HAP-1 (cell line): ENCODE measurements at regions of chr2 and their contacts with region 1.

Region 1: DNA sequence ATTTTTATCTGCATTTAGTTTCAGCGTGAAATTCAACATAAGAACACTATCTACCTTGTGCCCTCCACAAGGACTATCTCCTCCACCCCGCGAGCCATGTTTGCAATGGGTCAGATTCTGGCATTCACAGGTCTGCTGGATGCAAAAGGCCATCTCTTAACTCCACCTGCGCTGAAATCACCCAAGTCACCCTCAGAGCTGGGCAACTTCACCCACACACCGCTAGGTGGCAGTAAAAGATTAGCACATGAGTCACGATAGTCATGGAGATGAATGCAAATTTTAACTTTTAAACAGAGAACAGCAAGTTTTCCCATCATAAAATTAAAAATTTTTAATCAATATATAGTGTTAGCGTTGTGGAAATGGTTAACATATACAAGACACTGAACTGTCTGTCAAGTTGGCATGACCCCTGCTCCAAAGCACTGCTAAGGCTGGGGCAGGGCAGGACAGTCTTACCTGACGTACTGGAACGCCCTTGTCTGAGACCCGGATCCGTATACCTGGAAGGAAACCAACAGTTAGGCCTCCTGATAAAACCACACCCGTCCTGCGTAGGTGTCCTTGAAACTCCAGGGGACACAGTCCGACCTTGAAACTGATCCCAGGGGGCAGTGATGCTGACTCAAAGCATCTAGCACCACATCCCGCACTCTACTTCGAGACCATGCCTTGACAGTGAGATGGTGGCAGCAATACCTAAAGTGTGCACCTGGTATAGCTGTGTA is 89.6 kb downstream of the UXS1 start:
- DNase-seq: peak; percentile 47 to 66
- H3K4me3 ChIP-seq: no peak overlapping the region
- H3K4me1 ChIP-seq: no peaks in the 10 kb centered on the region
- H3K27me3 ChIP-seq: no peaks in the 10 kb centered on the region

Region 2: DNA sequence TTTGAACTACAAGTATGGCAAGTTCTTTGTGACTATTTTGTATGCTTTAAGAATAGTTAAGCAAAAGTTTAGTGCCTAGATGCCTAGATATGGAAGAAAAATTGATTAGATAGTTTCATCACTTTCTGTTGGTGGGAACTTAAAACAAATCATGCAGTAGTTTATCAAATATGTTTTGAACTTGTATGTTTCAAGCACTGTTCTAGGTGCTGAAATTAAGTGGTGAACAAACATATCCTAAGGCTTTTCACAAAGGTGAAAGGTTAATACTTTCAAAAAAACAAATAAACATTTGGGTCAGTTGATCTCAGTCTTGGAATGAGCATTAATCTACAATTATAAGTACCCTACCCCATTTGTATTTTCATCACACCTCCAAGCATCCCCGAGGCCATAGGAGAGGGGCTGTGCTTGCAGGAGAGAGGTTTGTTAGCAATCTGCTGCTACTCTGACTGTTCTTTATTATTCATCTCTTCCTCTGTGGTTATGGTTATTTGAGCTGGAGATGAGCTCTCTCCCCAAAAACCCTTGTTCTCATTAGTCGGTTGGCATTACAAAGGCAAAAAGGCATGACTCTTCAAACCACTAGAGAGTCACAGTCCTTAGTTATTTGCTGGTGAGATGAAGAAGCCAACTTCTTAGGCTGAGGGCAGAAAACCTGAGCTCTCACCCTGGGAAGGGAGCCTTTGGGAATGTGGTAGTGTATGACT is 601.7 kb before region 1 on chr2:
- in situ Hi-C with region 1: no loop called
- DNase-seq: no peak
- H3K4me3 ChIP-seq: no peak overlapping the region
- H3K4me1 ChIP-seq: no peaks in the 10 kb centered on the region
- H3K27me3 ChIP-seq: no peaks in the 10 kb centered on the region

Region 3: GRCh38 chr2:106332054-106332453 is 227.6 kb after region 1 on chr2:
- in situ Hi-C with region 1: loop called (anchors 25 kb)
- DNase-seq: no peak
- H3K4me3 ChIP-seq: no peak overlapping the region
- H3K4me1 ChIP-seq: no peaks in the 10 kb centered on the region
- H3K27me3 ChIP-seq: no peaks in the 10 kb centered on the region

Region 4: DNA sequence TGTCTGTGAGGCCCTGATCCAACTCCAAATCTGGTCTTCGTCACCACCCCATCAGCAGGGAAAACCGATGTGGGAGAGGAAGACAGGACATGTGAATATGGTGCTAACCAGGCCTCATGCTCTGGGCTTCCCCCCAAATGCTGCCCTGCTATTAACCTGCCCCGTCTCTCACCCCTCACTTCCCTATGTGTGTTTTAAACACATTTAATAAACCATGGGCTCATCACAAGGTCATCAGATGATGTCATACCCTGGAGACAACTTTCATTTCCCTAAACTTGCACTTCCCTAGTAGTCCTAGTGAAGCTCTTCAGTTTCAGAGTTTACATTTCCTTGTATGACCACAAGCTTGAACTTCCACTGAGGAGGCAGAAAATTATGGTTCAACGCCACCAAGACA is 432.6 kb after region 1 on chr2:
- in situ Hi-C with region 1: loop called (anchors 10 kb)
- DNase-seq: no peak
- H3K4me3 ChIP-seq: no peak overlapping the region
- H3K4me1 ChIP-seq: no peaks in the 10 kb centered on the region
- H3K27me3 ChIP-seq: no peaks in the 10 kb centered on the region